ENCODE measurements at regions of chr12 and their contacts with region 1.

Region 1: DNA sequence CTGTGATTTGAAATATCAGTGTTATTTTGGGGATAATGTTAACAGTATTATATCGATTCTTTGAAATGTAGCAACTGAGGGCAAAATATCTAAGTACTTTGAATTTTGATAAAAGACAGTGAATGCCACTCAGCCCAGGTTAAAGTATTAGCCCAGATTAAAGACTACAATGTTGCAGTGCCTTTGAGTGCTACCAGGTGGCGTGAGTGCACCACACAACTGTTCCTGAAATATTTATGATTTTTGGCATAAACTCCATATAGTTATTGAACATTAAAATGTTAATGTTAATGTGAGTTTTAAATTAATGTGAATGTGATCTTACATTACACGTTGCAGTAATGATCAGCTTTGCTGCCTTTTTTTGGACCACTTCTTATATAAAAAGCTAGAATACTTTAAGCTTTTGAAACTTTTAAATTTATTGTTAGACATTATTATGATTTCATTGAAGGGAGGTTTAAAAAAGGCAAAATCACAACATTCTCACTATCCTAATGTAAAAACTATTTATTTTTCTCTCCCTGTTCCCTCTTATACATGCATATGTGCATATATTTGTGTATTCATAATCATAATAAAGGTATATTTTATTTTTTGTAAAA is 22.5 kb downstream of the MRPS35 start:
- DNase-seq: peak; percentile 52
- ATAC-seq: peak; percentile 84
- H3K4me3 ChIP-seq: no peak overlapping the region
- H3K27ac ChIP-seq: no peak overlapping the region
- H3K4me1 ChIP-seq: no peaks in the 10 kb centered on the region
- H3K27me3 ChIP-seq: no peaks in the 10 kb centered on the region
- CTCF ChIP-seq: peak; percentile 95
- POLR2A ChIP-seq: peak; percentile 49; the same call in 1 of the 2 replicates
- RAD21 ChIP-seq: peak; percentile 96

Region 2: DNA sequence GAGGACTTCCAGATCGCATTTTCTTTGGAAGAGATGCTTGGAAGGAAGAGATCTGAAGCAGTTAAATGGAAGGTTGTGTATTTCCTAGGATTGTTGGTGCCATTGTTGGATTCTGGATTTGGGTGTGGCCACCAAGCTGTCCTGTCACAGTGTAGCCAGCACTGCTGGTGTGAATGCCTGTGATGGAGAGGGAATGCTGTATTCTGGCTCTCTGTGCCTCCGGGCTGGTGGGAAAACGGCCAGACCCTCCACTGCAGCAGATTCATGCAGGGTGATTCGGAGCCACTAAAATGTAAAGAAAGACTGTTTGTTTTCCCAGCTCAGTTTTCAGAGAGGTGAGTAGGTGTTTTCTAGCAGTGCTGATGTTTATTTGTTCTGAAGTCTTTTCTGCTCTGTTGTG is 77.6 kb after region 1 on chr12:
- CTCF ChIA-PET with region 1: no interaction called
- POLR2A ChIA-PET with region 1: no interaction called
- dilution Hi-C with region 1: no loop called
- in situ Hi-C with region 1: no loop called
- intact Hi-C with region 1: no loop called
- DNase-seq: peak; percentile 45
- ATAC-seq: peak; percentile 62
- H3K4me3 ChIP-seq: no peak overlapping the region
- H3K27ac ChIP-seq: no peak overlapping the region
- H3K4me1 ChIP-seq: peaks cover 3% of the 10 kb centered on the region
- H3K27me3 ChIP-seq: no peaks in the 10 kb centered on the region
- CTCF ChIP-seq: no peak
- POLR2A ChIP-seq: no peak
- RAD21 ChIP-seq: no peak

Region 3: DNA sequence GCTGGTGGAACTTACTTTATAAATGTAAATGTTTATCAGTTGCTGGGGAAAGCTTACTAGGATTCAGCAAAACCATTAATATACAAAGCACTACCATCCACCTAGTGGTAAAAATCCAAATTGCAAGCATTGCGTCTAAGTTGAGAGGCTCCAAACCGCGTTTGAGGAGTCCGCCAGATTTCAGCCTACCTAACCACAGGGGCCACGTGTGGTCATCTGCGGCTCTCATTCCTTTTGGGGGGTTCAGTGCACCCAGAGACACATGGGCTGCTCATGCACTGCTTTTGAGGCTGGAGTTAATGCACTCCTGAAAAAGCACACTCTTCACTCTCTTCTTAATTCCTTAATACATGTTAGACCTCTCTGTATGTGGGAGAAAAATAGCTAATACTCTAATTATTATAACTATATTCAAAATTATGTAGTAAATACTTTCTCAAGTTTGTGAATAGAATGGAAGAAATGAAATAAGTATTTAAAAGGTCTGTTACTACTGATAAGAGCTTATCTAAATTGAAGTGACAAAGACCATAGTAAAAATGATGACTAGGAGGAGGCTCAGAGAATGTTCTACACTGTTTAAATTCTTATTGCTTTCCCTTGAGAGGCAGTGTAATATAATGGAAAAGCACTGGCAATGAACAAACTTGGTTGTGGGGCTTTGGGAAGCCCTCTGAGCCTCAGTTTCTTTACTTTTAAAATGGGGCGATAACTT is 88.3 kb after region 1 on chr12:
- CTCF ChIA-PET with region 1: interaction called, 10 read pairs
- POLR2A ChIA-PET with region 1: no interaction called
- dilution Hi-C with region 1: no loop called
- in situ Hi-C with region 1: no loop called
- intact Hi-C with region 1: loop called (anchors 5 kb)
- DNase-seq: peak; percentile 85
- ATAC-seq: peak; percentile 79
- H3K4me3 ChIP-seq: no peak overlapping the region
- H3K27ac ChIP-seq: no peak overlapping the region
- H3K4me1 ChIP-seq: peaks cover 9% of the 10 kb centered on the region
- H3K27me3 ChIP-seq: no peaks in the 10 kb centered on the region
- CTCF ChIP-seq: peak; percentile 73
- POLR2A ChIP-seq: no peak
- RAD21 ChIP-seq: peak; percentile 59

Region 4: DNA sequence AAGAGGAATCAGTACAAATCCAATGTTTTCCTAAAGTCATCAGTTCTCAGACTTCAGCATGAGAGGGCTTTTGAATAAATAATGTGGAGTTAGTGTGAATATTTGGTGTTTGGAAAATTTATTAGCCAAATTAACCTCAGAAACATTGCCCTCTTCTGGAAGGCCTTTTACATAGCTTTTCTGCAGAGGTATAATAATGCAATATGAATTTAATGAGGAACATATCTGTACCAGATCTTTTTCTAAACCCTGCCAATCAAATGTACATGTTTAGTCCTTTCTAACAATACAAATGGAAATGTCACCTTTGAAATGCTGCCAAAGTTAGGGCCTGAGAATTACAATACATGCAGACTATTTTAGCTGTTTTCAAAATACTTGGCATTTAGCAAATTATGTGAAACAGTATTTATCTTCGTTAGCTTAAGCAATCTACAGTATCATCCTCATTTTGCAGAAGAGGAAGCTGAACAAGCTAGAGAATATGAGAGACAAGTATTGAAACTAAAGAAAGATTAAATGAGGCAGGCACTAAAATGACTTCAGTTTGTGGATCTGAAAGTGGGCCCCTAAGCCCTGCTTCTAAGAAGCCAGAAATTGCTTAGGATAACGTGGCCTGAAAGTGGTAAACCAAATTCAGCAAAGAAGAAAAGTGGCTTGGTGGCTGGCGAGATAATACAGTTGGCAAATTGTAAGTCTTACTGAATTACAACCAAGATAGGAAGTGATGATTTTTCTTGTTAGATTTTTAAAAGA is 107.3 kb after region 1 on chr12:
- CTCF ChIA-PET with region 1: no interaction called
- POLR2A ChIA-PET with region 1: no interaction called
- dilution Hi-C with region 1: no loop called
- in situ Hi-C with region 1: no loop called
- intact Hi-C with region 1: loop called (anchors 1 kb)
- DNase-seq: no peak
- ATAC-seq: 0 out of 2 replicates have a peak, but pooled peaks have one; percentile 30
- H3K4me3 ChIP-seq: no peak overlapping the region
- H3K27ac ChIP-seq: no peak overlapping the region
- H3K4me1 ChIP-seq: peaks cover 6% of the 10 kb centered on the region; the same call in 1 of the 2 replicates
- H3K27me3 ChIP-seq: no peaks in the 10 kb centered on the region
- CTCF ChIP-seq: peak; percentile 58
- POLR2A ChIP-seq: no peak
- RAD21 ChIP-seq: peak; percentile 33; the same call in 1 of the 2 replicates

Region 5: DNA sequence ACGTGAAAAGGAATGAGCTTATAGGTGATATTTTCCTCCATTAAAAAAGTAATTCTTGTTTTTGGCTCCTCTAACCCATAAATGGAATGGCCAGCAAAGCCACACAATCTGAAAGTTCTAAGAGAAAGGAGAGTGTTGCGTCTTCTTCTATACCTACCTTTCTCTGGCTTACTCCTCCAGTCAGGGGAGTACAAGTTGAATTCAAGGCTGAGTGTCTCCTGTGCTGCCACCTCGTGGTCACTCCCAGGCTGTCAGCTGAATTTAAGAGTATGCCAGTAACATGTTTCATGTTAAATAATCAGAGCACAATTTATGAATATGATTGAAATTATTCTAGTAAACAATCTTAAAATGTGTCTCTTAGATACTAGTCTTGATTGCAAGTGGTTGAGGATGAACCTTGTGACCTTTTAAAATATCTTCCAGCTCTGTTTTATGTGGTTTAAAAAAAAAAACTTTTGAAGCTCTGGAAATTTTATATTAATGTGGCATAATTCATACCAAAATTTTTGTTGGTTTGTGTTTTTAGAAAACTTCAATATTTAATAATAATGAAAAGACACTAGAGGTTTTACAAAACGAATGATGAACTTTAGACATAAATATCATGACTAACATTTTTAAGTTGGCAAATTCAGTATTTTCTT is 207.7 kb after region 1 on chr12:
- CTCF ChIA-PET with region 1: interaction called, 11 read pairs
- POLR2A ChIA-PET with region 1: no interaction called
- dilution Hi-C with region 1: no loop called
- in situ Hi-C with region 1: loop called (anchors 5 kb)
- intact Hi-C with region 1: loop called (anchors 1 kb)
- DNase-seq: peak; percentile 82
- ATAC-seq: peak; percentile 79
- H3K4me3 ChIP-seq: no peak overlapping the region
- H3K27ac ChIP-seq: no peak overlapping the region
- H3K4me1 ChIP-seq: no peaks in the 10 kb centered on the region
- H3K27me3 ChIP-seq: no peaks in the 10 kb centered on the region
- CTCF ChIP-seq: peak; percentile 84
- POLR2A ChIP-seq: no peak
- RAD21 ChIP-seq: peak; percentile 92

Region 6: GRCh38 chr12:27946421-27946820 is 213.3 kb after region 1 on chr12:
- CTCF ChIA-PET with region 1: interaction called, 11 read pairs
- POLR2A ChIA-PET with region 1: no interaction called
- dilution Hi-C with region 1: no loop called
- in situ Hi-C with region 1: loop called (anchors 5 kb)
- intact Hi-C with region 1: loop called (anchors 1 kb)
- DNase-seq: no peak
- ATAC-seq: no peak
- H3K4me3 ChIP-seq: no peak overlapping the region
- H3K27ac ChIP-seq: no peak overlapping the region
- H3K4me1 ChIP-seq: no peaks in the 10 kb centered on the region
- H3K27me3 ChIP-seq: no peaks in the 10 kb centered on the region
- CTCF ChIP-seq: no peak
- POLR2A ChIP-seq: no peak
- RAD21 ChIP-seq: no peak

Region 7: GRCh38 chr12:28172434-28173030 is 439.4 kb after region 1 on chr12:
- CTCF ChIA-PET with region 1: interaction called, 3 read pairs
- POLR2A ChIA-PET with region 1: no interaction called
- dilution Hi-C with region 1: no loop called
- in situ Hi-C with region 1: no loop called
- intact Hi-C with region 1: loop called (anchors 1 kb)
- DNase-seq: peak; percentile 68
- ATAC-seq: peak; percentile 93
- H3K4me3 ChIP-seq: no peak overlapping the region
- H3K27ac ChIP-seq: no peak overlapping the region
- H3K4me1 ChIP-seq: no peaks in the 10 kb centered on the region
- H3K27me3 ChIP-seq: no peaks in the 10 kb centered on the region
- CTCF ChIP-seq: peak; percentile 80
- POLR2A ChIP-seq: no peak
- RAD21 ChIP-seq: peak; percentile 91

Region 8: GRCh38 chr12:28998637-28999120 is 1265.5 kb after region 1 on chr12:
- CTCF ChIA-PET with region 1: no interaction called
- POLR2A ChIA-PET with region 1: no interaction called
- dilution Hi-C with region 1: no loop called
- in situ Hi-C with region 1: loop called (anchors 25 kb)
- intact Hi-C with region 1: loop called (anchors 10 kb)
- DNase-seq: peak; percentile 56
- ATAC-seq: peak; percentile 88
- H3K4me3 ChIP-seq: no peak overlapping the region
- H3K27ac ChIP-seq: no peak overlapping the region
- H3K4me1 ChIP-seq: no peaks in the 10 kb centered on the region
- H3K27me3 ChIP-seq: no peaks in the 10 kb centered on the region
- CTCF ChIP-seq: peak; percentile 61
- POLR2A ChIP-seq: no peak
- RAD21 ChIP-seq: peak; percentile 64